CD4-positive, alpha-beta T cell (primary cell): ENCODE measurements at regions of chr5 and their contacts with region 1.

Region 1: GRCh38 chr5:33440482-33441240 is at the start of gene TARS1:
- DNase-seq: peak; percentile 79 to 97 (median 88)
- ATAC-seq: peak; percentile 92
- H3K4me3 ChIP-seq: peak within 1 kb of the TSS; percentile 86
- H3K4me3 Mint-ChIP-seq: no peak within 1 kb of the TSS
- H3K27ac ChIP-seq: peak within 1 kb of the TSS; percentile 65 to 73
- H3K27ac Mint-ChIP-seq: no peak within 1 kb of the TSS
- H3K4me1 ChIP-seq: peaks cover 22% of the 10 kb centered on the region
- H3K4me1 Mint-ChIP-seq: peaks cover 25% of the 10 kb centered on the region
- H3K27me3 ChIP-seq: no peaks in the 10 kb centered on the region
- H3K27me3 Mint-ChIP-seq: no peaks in the 10 kb centered on the region
- CTCF ChIP-seq: no peak
- total RNA-seq, gene TARS1: 31.3 to 32.0 TPM

Region 2: GRCh38 chr5:31531888-31532710 is 1908.6 kb before region 1 on chr5 and contains the starts of genes C5orf22 and DROSHA:
- CTCF ChIA-PET with region 1: no interaction called
- POLR2A ChIA-PET with region 1: no interaction called
- intact Hi-C with region 1: loop called in 1 of 2 experiments (anchors 5 kb)
- DNase-seq: peak; percentile 78 to 95 (median 88)
- ATAC-seq: peak; percentile 96
- H3K4me3 ChIP-seq: peak within 1 kb of the TSS; percentile 83
- H3K4me3 Mint-ChIP-seq: peak within 1 kb of the TSS; percentile 98
- H3K27ac ChIP-seq: peak within 1 kb of the TSS; percentile 48 to 65
- H3K27ac Mint-ChIP-seq: peak within 1 kb of the TSS; percentile 90
- H3K4me1 ChIP-seq: peaks cover 33% of the 10 kb centered on the region
- H3K4me1 Mint-ChIP-seq: peaks cover 76% of the 10 kb centered on the region
- H3K27me3 ChIP-seq: no peaks in the 10 kb centered on the region
- H3K27me3 Mint-ChIP-seq: no peaks in the 10 kb centered on the region
- CTCF ChIP-seq: no peak
- total RNA-seq, gene C5orf22: 9.8 to 12.3 TPM
- total RNA-seq, gene DROSHA: 28.8 to 38.1 TPM

Region 3: GRCh38 chr5:33244441-33245150 is 196.1 kb before region 1 on chr5:
- CTCF ChIA-PET with region 1: no interaction called
- POLR2A ChIA-PET with region 1: no interaction called
- intact Hi-C with region 1: no loop called
- DNase-seq: no peak
- ATAC-seq: no peak
- H3K4me3 ChIP-seq: no peak overlapping the region
- H3K4me3 Mint-ChIP-seq: no peak overlapping the region
- H3K27ac ChIP-seq: no peak overlapping the region
- H3K27ac Mint-ChIP-seq: no peak overlapping the region
- H3K4me1 ChIP-seq: no peaks in the 10 kb centered on the region
- H3K4me1 Mint-ChIP-seq: no peaks in the 10 kb centered on the region
- H3K27me3 ChIP-seq: no peaks in the 10 kb centered on the region
- H3K27me3 Mint-ChIP-seq: no peaks in the 10 kb centered on the region
- CTCF ChIP-seq: no peak

Region 4: DNA sequence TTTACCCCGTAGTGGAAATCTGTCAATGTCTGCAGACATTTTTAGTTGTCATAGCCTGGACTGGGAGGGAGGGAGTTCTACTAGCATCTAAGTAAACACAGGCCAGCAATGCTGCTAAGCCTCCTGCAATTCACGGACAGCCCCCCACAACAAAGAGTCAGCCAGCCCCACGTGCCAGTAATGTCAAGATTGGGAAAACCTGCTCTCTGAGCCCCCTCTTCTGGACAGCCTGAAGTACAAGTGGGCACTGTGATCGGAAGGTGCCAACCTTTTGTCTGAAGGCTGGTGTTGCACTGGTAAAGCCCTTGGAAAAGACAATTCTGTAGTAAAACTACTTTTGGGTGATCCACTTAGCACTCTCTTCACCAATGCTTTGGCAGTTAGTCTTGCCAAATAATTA is 154.6 kb after region 1 on chr5:
- CTCF ChIA-PET with region 1: no interaction called
- POLR2A ChIA-PET with region 1: no interaction called
- intact Hi-C with region 1: loop called in 1 of 2 experiments (anchors 10 kb)
- DNase-seq: no peak
- ATAC-seq: no peak
- H3K4me3 ChIP-seq: no peak overlapping the region
- H3K4me3 Mint-ChIP-seq: no peak overlapping the region
- H3K27ac ChIP-seq: no peak overlapping the region
- H3K27ac Mint-ChIP-seq: no peak overlapping the region
- H3K4me1 ChIP-seq: no peaks in the 10 kb centered on the region
- H3K4me1 Mint-ChIP-seq: no peaks in the 10 kb centered on the region
- H3K27me3 ChIP-seq: no peaks in the 10 kb centered on the region
- H3K27me3 Mint-ChIP-seq: peaks cover 8% of the 10 kb centered on the region
- CTCF ChIP-seq: no peak

Region 5: GRCh38 chr5:34459908-34460307 is 1019.2 kb after region 1 on chr5:
- CTCF ChIA-PET with region 1: no interaction called
- POLR2A ChIA-PET with region 1: no interaction called
- intact Hi-C with region 1: loop called (anchors 5 kb)
- DNase-seq: no peak
- ATAC-seq: no peak
- H3K4me3 ChIP-seq: no peak overlapping the region
- H3K4me3 Mint-ChIP-seq: no peak overlapping the region
- H3K27ac ChIP-seq: no peak overlapping the region
- H3K27ac Mint-ChIP-seq: no peak overlapping the region
- H3K4me1 ChIP-seq: no peaks in the 10 kb centered on the region
- H3K4me1 Mint-ChIP-seq: no peaks in the 10 kb centered on the region
- H3K27me3 ChIP-seq: no peaks in the 10 kb centered on the region
- H3K27me3 Mint-ChIP-seq: no peaks in the 10 kb centered on the region
- CTCF ChIP-seq: no peak

Region 6: DNA sequence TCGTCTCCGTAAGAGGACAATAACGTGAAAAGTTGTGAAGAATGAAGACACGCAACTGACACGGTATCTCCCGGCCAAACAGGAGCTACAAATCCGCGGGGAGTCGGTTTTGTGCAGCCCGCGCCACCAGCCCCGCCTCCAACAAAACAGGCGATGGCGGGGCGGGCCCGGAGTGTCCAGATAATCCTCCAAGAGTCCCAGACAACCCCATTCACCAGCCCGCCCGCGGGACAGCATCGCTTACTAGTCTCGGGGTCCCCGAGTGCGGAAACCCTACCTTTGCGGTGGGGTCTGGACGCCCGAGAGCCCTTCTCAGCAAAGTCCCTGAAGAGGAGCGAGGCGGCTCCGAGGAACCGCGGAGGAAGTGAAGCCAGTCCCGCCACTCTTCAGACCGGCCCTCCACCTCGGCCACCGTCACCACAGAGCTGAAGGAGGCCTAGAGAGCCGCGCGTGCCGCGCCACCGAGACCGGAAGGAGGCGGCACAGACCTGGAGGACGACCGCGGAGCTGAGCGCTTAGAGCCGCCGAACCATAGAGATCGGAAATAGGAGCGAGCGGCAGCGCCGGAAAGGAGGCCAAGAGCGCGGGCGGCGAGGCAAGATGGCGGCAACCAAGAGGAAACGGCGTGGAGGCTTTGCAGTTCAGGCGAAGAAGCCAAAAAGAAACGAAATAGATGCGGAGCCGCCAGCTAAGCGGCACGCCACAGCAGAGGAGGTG is 1474.6 kb after region 1 on chr5 and contains the starts of genes BRIX1 and RAD1:
- CTCF ChIA-PET with region 1: interaction called, 3 read pairs
- POLR2A ChIA-PET with region 1: no interaction called
- intact Hi-C with region 1: loop called in 1 of 2 experiments (anchors 5 kb)
- DNase-seq: peak; percentile 87 to 97 (median 90)
- ATAC-seq: peak; percentile 96
- H3K4me3 ChIP-seq: peak within 1 kb of the TSS; percentile 91
- H3K4me3 Mint-ChIP-seq: peak within 1 kb of the TSS; percentile 77
- H3K27ac ChIP-seq: peak within 1 kb of the TSS; percentile 84 to 88
- H3K27ac Mint-ChIP-seq: no peak within 1 kb of the TSS
- H3K4me1 ChIP-seq: peaks cover 27% of the 10 kb centered on the region
- H3K4me1 Mint-ChIP-seq: peaks cover 35% of the 10 kb centered on the region
- H3K27me3 ChIP-seq: no peaks in the 10 kb centered on the region
- H3K27me3 Mint-ChIP-seq: no peaks in the 10 kb centered on the region
- CTCF ChIP-seq: no peak
- total RNA-seq, gene BRIX1: 29.7 to 30.2 TPM
- total RNA-seq, gene RAD1: 26.7 to 29.2 TPM